ENCODE measurements at regions of chr5 and their contacts with region 1.

Region 1: DNA sequence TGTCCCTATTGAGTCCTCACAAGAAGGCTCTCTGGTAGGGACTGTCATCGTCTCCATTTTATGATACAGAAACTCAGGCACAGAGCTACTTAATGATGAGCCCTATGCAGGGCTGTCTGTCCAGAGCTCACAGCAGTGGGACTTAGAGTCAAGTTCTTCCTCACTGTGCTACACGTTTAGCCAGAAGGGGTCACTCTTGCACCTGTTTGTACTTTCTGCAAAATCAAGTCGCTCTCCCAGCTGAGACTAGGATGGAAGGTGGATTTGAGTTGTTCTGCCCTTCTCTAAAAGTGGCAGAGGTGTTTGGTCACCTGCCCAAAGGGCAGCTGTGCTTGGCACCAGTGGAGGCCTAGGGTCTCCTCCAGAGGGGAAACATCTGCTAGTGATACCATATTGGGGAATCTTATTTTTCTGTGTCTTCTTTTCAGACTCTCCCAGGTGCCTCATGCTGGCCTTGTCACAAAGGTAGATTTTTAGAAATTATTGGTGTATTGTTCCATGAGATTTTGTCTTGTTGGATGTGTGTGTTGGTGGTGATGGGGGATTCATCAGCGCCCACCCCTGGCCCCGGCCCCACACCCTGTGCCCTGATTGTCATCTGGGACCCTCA is 104.2 kb downstream of the PPARGC1B start:
- DNase-seq: peak in 31 of 35 experiments; percentile 4 to 78 (median 35)
- ATAC-seq: peak; percentile 42 to 64 (median 54)
- H3K4me3 ChIP-seq: no peak overlapping the region
- H3K4me3 Mint-ChIP-seq: no peak overlapping the region
- H3K27ac ChIP-seq: no peak overlapping the region
- H3K27ac Mint-ChIP-seq: no peak overlapping the region
- H3K4me1 ChIP-seq: no peaks in the 10 kb centered on the region
- H3K4me1 Mint-ChIP-seq: no peaks in the 10 kb centered on the region
- H3K27me3 ChIP-seq: no peaks in the 10 kb centered on the region
- H3K27me3 Mint-ChIP-seq: no peaks in the 10 kb centered on the region

Region 2: DNA sequence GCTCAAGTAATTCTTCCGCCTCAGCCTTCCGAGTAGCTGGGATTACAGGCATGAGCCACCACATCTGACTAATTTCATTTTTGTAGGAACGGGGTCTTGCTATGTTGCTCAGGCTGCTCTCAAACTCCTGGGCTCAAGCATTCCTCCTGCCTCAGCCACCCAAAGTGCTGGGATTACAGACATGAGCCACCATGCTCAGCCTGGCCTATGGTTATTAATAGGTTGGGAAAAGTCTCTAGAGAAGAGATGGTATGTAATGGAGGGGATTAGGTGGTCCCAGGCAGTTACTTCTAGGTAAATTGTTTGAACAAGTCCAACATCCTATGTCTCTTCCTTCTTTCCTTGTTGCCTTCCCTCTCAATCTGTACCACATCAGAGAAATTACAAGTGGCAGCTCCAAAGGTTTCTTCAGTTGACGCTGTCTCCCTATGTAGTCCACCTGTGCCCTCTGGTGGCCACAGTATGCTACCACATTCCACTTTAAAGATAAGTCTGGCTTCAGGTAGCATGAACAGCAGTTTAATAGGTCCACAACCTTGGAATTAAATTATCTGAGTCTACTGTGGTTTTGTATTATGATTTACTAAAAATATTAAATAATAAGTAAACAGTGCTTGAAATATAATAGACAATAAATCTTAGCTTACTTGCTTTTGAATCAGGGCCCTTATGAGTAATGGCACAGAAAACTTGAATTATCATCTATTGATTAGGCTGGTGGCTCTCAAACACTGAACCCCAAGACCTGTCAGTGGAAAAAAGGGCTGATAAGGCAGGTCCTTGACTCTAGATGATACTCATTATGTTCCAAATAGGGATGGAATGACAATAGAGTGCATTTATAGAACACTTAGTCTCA is 156.4 kb after region 1 on chr5:
- CTCF ChIA-PET with region 1: interaction called, 18 to 53 read pairs
- POLR2A ChIA-PET with region 1: no interaction called
- DNase-seq: peak; percentile 16 to 83 (median 57)
- ATAC-seq: peak; percentile 84 to 92 (median 87)
- H3K4me3 ChIP-seq: no peak overlapping the region
- H3K4me3 Mint-ChIP-seq: no peak overlapping the region
- H3K27ac ChIP-seq: no peak overlapping the region
- H3K27ac Mint-ChIP-seq: no peak overlapping the region
- H3K4me1 ChIP-seq: no peaks in the 10 kb centered on the region
- H3K4me1 Mint-ChIP-seq: peaks cover 0 to 6% (median 0%) of the 10 kb centered on the region in 3 donors
- H3K27me3 ChIP-seq: no peaks in the 10 kb centered on the region
- H3K27me3 Mint-ChIP-seq: no peaks in the 10 kb centered on the region